ENCODE measurements at regions of chr1 and their contacts with region 1.

Region 1: GRCh38 chr1:54861070-54861761 is 25.8 kb downstream of the DHCR24 start:
- DNase-seq: peak; percentile 79 to 89
- H3K4me3 ChIP-seq: no peak overlapping the region
- H3K27ac ChIP-seq: peak overlapping the region; percentile 88
- H3K4me1 ChIP-seq: peaks cover 90% of the 10 kb centered on the region
- H3K27me3 ChIP-seq: no peaks in the 10 kb centered on the region
- CTCF ChIP-seq: no peak

Region 2: GRCh38 chr1:54794451-54795355 is 66.5 kb before region 1 on chr1:
- CTCF ChIA-PET with region 1: no interaction called
- POLR2A ChIA-PET with region 1: no interaction called
- intact Hi-C with region 1: loop called (anchors 2 kb)
- DNase-seq: peak; percentile 82 to 88
- H3K4me3 ChIP-seq: no peak overlapping the region
- H3K27ac ChIP-seq: peak overlapping the region; percentile 85
- H3K4me1 ChIP-seq: peaks cover 59% of the 10 kb centered on the region
- H3K27me3 ChIP-seq: no peaks in the 10 kb centered on the region
- CTCF ChIP-seq: no peak; the same call in 1 of the 2 replicates

Region 3: GRCh38 chr1:54805466-54805865 is 55.8 kb before region 1 on chr1:
- CTCF ChIA-PET with region 1: no interaction called
- POLR2A ChIA-PET with region 1: no interaction called
- intact Hi-C with region 1: no loop called
- DNase-seq: no peak
- H3K4me3 ChIP-seq: no peak overlapping the region
- H3K27ac ChIP-seq: peak overlapping the region; percentile 85
- H3K4me1 ChIP-seq: peaks cover 61% of the 10 kb centered on the region
- H3K27me3 ChIP-seq: no peaks in the 10 kb centered on the region
- CTCF ChIP-seq: no peak

Region 4: GRCh38 chr1:55007625-55008024 is 146.4 kb after region 1 on chr1:
- CTCF ChIA-PET with region 1: no interaction called
- POLR2A ChIA-PET with region 1: no interaction called
- intact Hi-C with region 1: no loop called
- DNase-seq: peak; percentile 27 to 56
- H3K4me3 ChIP-seq: no peak overlapping the region
- H3K27ac ChIP-seq: no peak overlapping the region
- H3K4me1 ChIP-seq: peaks cover 9% of the 10 kb centered on the region; the same call in 1 of the 2 replicates
- H3K27me3 ChIP-seq: no peaks in the 10 kb centered on the region
- CTCF ChIP-seq: no peak

Region 5: DNA sequence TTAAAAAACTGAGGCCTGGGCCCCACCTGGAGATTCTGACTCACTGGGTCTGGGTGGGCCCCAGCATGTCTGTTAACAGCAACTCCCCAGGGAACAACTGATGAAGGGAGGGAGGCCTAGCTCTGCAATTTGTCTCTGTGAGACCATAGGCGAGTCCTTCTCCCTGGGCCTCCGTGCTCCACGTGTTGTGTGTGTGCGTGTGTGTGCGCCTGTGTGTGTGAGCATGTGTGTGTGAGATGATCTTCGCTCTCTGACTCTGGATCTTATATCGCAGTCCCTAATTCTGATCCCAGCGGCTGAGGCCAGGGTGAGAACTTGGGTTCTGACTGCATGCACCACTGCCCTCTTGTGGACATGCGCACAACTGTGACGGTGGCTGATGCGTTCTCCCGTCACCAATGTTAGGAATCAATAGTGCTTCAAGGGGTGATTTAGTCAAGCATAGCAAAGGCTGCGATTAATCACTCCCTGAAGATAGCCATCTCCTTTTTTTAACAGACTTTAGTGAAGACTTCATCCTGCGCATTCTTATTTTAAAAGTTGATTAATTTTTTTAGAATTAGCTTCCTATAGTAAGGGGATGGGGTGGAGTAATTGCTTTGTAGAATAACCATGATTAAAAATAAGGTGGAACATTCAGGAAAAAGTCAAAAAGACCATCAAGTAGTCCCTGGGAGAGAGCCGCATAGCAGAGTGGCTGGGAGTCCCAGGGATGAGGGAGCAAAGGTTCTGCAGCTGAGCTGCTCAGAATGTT is 416.3 kb after region 1 on chr1:
- CTCF ChIA-PET with region 1: no interaction called
- POLR2A ChIA-PET with region 1: no interaction called
- intact Hi-C with region 1: no loop called
- DNase-seq: peak; percentile 60 to 71
- H3K4me3 ChIP-seq: no peak overlapping the region
- H3K27ac ChIP-seq: no peak overlapping the region
- H3K4me1 ChIP-seq: peaks cover 12% of the 10 kb centered on the region
- H3K27me3 ChIP-seq: no peaks in the 10 kb centered on the region
- CTCF ChIP-seq: peak; percentile 91

Measured in PC-9 (cell line).